Uterus (tissue), 4 donors: ENCODE measurements at regions of chr12 and their contacts with region 1.

Region 1: DNA sequence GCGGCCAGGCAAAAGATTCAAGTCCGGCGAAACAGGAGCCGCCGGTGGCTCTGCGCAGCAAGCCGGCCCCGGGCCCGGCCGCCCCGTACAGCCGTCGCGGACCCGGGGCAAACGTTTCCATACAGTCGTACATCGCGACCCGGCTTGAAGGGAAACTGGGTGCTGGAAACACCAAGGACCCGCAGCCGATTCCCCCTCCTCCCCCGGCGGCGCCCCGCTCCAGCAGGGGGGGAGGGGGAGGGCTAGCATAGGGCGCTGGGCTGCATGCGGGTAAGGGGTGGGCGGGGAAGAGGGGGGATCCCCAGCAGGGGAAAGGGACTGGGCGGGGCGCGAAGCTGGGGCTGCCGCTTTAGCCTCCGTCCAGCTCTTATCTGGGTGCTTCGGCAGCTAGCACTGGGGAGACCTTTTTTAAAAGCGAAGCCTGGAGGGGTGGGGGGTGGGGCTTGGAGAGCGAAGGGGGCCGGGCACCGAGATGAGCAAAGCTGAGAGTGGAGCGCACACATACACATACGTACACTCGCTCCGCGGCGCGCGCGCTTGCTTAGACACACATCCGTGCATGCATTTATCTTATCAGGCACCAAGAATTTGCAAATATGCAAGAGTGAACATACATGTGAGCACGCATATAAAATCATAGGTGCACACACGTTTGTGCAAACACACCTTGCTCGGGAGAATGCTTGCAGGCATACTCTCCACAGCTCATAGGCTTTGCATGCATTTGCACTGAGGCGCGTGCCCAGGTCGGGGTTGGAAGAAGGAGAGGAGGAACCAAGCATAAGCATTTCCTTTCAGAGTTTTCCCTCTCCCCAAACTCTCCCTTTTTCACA is 11.8 kb downstream of the RARG start:
- DNase-seq: peak in 1 of 2 donors; percentile 72
- H3K4me3 ChIP-seq: peak overlapping the region; percentile 73 to 78
- H3K27ac ChIP-seq: peak overlapping the region; percentile 99
- H3K4me1 ChIP-seq: peaks cover 8 to 41% of the 10 kb centered on the region in 2 donors
- H3K27me3 ChIP-seq: no peaks in the 10 kb centered on the region
- CTCF ChIP-seq: no peak
- POLR2A ChIP-seq: no peak

Region 2: GRCh38 chr12:53251477-53252348 is 31.5 kb after region 1 on chr12:
- intact Hi-C with region 1: loop called (anchors 5 kb)
- DNase-seq: peak; percentile 70 to 79
- H3K4me3 ChIP-seq: peak overlapping the region; percentile 65 to 72
- H3K27ac ChIP-seq: peak overlapping the region; percentile 89 to 93
- H3K4me1 ChIP-seq: peaks cover 0 to 17% of the 10 kb centered on the region in 2 donors
- H3K27me3 ChIP-seq: no peaks in the 10 kb centered on the region
- CTCF ChIP-seq: peak; percentile 36 to 55 (median 46)
- POLR2A ChIP-seq: peak in 1 of 2 donors; percentile 39